IMR-90 (cell line): ENCODE measurements at regions of chr11 and their contacts with region 1.

Region 1: DNA sequence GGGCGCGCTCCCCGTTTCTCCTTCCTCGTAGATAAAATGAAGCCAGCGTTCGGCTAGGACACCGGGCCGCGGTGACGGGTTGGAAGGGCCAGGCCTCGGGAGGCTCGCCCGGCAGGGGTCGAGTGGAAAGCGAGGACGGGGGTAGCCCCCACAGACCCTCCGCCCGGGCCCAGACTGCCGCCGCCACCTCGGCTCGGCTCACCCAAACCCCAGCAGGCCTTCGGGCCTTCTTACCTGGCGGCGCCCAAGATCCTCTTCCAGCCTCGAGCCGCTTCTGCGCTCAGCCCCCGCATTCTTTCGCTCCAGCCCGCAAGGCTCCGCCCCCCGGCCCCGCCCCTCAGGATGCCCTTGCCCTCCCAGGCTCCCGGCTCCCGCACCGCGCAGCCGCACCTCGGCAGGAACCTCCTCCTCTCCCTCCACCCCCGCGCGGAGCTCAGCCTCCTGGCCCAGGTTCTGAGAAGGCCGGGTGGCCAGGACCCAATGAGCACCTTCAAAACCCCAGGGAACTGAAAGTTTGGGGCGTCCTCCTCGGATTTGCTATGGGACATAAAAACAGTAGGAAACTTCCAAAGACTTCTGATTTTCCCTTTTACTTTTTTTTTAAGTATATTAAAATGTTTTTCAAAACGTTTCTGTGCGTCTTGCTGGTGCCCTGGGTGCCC is at the start of gene CD59:
- DNase-seq: peak; percentile 88
- ATAC-seq: peak; percentile 94
- H3K4me3 ChIP-seq: peak within 1 kb of the TSS; percentile 77
- H3K27ac ChIP-seq: peak within 1 kb of the TSS; percentile 84
- H3K4me1 ChIP-seq: peaks cover 16% of the 10 kb centered on the region
- H3K27me3 ChIP-seq: no peaks in the 10 kb centered on the region
- CTCF ChIP-seq: no peak
- POLR2A ChIP-seq: peak; percentile 91
- RAD21 ChIP-seq: no peak
- total RNA-seq, gene CD59: 637 and 765 TPM in 2 replicates

Region 2: DNA sequence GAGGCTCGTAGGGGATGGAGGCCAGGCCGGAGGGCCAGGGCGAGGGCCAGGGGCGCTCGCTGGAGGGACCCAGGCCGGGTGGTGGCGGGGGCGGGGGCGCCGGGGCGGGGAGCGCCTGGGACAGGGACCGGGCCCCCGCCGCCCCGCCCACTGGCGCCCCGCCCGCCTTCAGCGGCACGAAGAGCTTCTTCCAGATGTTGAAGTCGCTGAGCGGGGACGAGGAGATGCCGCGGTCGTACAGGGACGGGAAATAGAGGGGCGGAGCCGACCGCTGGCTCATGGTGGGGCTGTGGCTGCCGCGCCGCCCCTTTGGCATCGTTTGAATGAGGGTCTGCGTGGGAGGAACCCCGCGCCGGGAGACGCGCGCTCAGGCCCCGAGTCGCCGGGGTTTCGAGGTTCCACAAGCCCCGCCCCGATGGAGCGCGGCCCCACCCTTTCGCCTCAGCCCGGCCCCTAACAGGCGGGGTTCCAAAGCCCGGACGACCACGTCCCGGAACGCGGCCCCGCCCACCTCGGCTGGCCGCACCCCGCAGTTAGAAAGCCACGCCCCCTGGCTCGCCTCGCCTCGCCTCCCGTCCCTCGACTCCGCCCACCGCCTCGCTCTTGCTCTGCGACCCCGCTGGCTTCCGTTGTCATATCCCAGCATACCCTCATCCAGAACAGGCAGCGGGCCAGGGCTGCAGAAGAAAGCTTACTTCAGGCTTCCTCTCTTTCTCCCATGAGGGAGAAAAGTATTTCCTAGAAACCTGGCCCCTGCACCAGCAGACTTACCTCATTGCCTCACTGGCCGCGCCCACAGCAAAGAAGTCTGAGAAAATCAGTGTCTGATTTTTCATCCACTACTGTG is 35.6 kb before region 1 on chr11 and contains the start of gene C11orf91:
- CTCF ChIA-PET with region 1: no interaction called
- POLR2A ChIA-PET with region 1: interaction called, 15 read pairs
- dilution Hi-C with region 1: no loop called
- in situ Hi-C with region 1: no loop called
- intact Hi-C with region 1: no loop called
- DNase-seq: peak; percentile 94
- ATAC-seq: peak; percentile 93
- H3K4me3 ChIP-seq: peak within 1 kb of the TSS; percentile 65
- H3K27ac ChIP-seq: peak within 1 kb of the TSS; percentile 76
- H3K4me1 ChIP-seq: peaks cover 23% of the 10 kb centered on the region
- H3K27me3 ChIP-seq: no peaks in the 10 kb centered on the region
- CTCF ChIP-seq: no peak
- POLR2A ChIP-seq: peak; percentile 63
- RAD21 ChIP-seq: no peak
- total RNA-seq, gene C11orf91: not detected in 2 replicates

Region 3: GRCh38 chr11:33716236-33716635 is 20.0 kb before region 1 on chr11:
- CTCF ChIA-PET with region 1: no interaction called
- POLR2A ChIA-PET with region 1: no interaction called
- dilution Hi-C with region 1: no loop called
- in situ Hi-C with region 1: no loop called
- intact Hi-C with region 1: no loop called
- DNase-seq: no peak
- ATAC-seq: no peak; the same call in 1 of the 2 replicates
- H3K4me3 ChIP-seq: no peak overlapping the region
- H3K27ac ChIP-seq: no peak overlapping the region
- H3K4me1 ChIP-seq: peaks cover 6% of the 10 kb centered on the region
- H3K27me3 ChIP-seq: no peaks in the 10 kb centered on the region
- CTCF ChIP-seq: peak; percentile 50
- POLR2A ChIP-seq: no peak
- RAD21 ChIP-seq: peak; percentile 37

Region 4: DNA sequence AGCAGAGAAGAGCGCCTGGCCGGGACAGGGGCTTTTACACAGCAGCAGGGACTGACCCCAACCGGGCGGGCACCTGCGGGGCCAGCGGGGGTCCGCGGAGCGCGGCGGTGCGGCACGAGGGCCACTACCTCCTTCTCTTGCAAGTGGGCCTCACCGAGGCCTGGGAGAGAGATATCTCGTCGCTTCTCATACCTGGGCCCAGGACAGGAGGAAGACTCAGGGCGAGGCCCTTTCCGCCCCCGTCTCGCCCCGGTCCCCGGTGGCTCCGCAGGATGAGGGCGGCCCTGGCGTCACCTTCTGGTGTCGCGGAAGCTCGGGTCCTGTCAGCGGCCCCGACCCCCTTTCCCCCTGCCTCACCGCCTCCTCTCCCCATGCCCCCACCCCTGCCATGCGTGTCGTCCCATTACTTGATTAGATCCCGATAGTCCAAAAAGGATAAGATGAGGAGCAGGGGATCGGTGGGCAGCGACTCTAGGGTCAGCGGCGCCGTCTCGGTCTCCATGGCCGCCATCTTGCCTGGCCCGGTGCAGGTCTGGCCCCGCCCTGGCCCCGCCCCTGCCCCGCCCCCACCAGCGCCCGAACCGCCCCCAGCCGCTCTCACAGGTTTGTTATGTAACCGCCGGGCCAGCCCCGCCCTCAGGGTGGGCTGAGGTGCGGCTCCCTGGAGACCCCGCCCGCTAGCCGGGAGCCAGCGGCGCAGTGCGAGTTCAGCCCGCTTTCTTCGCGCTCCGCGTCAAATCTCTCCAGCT is 37.9 kb after region 1 on chr11 and contains the start of gene FBXO3:
- CTCF ChIA-PET with region 1: no interaction called
- POLR2A ChIA-PET with region 1: interaction called, 11 read pairs
- dilution Hi-C with region 1: no loop called
- in situ Hi-C with region 1: no loop called
- intact Hi-C with region 1: no loop called
- DNase-seq: peak; percentile 58
- ATAC-seq: peak; percentile 92
- H3K4me3 ChIP-seq: peak within 1 kb of the TSS; percentile 82
- H3K27ac ChIP-seq: peak within 1 kb of the TSS; percentile 86
- H3K4me1 ChIP-seq: peaks cover 13% of the 10 kb centered on the region
- H3K27me3 ChIP-seq: no peaks in the 10 kb centered on the region
- CTCF ChIP-seq: no peak
- POLR2A ChIP-seq: peak; percentile 19; the same call in 1 of the 2 replicates
- RAD21 ChIP-seq: no peak
- total RNA-seq, gene FBXO3: 51.1 and 65.3 TPM in 2 replicates

Region 5: DNA sequence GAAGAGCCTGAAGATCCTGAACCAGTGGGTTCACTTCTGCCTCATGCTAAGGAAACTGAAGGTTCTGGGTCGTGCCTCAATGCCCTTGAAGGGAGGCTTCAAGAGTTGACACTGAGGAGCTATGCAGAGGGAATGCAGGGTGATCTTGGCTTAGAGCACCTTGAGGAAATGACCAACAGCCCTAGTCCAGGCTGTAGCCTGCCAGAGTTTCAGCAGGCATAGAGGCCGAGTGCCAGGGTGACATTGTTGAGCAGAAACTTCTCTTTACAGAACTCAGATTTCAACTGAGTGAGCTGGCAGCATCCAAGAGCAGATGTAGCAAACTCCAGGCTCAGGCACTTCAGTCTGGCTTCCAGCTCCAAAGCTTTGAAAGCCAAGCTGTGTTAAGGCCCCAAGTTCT is 292.1 kb after region 1 on chr11:
- CTCF ChIA-PET with region 1: no interaction called
- POLR2A ChIA-PET with region 1: no interaction called
- dilution Hi-C with region 1: no loop called
- in situ Hi-C with region 1: no loop called
- intact Hi-C with region 1: no loop called
- DNase-seq: peak; percentile 8
- ATAC-seq: no peak
- H3K4me3 ChIP-seq: no peak overlapping the region
- H3K27ac ChIP-seq: no peak overlapping the region
- H3K4me1 ChIP-seq: no peaks in the 10 kb centered on the region
- H3K27me3 ChIP-seq: peaks cover 8% of the 10 kb centered on the region
- CTCF ChIP-seq: no peak
- POLR2A ChIP-seq: no peak
- RAD21 ChIP-seq: no peak

Region 6: GRCh38 chr11:34051349-34052035 is 315.2 kb after region 1 on chr11 and contains the start of gene CAPRIN1:
- CTCF ChIA-PET with region 1: no interaction called
- POLR2A ChIA-PET with region 1: interaction called, 20 read pairs
- dilution Hi-C with region 1: no loop called
- in situ Hi-C with region 1: no loop called
- intact Hi-C with region 1: no loop called
- DNase-seq: peak; percentile 83
- ATAC-seq: peak; percentile 87
- H3K4me3 ChIP-seq: peak within 1 kb of the TSS; percentile 67
- H3K27ac ChIP-seq: peak within 1 kb of the TSS; percentile 99
- H3K4me1 ChIP-seq: peaks cover 4% of the 10 kb centered on the region; the same call in 1 of the 2 replicates
- H3K27me3 ChIP-seq: no peaks in the 10 kb centered on the region
- CTCF ChIP-seq: no peak
- POLR2A ChIP-seq: peak; percentile 70
- RAD21 ChIP-seq: no peak
- total RNA-seq, gene CAPRIN1: 253 and 266 TPM in 2 replicates